IMR-90 (cell line): ENCODE measurements at regions of chr3 and their contacts with region 1.

Region 1: DNA sequence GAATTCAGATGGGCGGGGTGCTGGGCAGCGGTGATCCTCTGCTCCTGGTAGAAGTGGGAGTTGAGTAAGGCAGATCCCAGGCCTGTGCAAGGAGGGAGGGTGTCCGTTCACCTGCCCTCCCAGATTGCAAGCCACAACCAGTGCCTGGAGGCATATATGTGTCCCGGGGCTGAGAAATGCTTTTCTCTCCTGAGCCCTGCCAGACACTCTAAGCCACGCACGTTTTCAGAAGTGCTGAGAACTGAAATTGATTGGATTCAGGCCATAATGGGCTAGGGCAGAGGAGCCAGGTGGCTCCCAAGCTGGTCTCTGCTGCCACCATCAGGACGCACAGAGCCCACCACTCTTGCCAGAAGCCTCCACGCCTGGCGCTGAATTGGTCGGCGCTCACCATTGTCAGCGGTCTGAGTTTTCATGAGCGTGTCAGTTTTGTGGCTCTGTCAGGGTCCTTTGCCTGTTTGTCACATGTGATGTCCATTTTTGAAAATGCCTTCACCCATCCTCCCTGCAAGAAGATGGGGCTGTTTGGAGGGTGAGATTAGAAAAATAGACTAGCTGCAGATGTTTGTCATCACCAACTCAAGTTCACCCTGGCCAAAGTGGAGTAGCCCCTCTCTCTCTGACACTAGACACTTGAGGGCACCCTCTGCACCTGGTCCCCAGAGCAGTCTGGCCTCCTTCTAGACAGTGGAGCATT is 15.4 kb upstream of the BFSP2 start:
- DNase-seq: peak; percentile 65
- ATAC-seq: peak; percentile 95
- H3K4me3 ChIP-seq: no peak overlapping the region
- H3K27ac ChIP-seq: no peak overlapping the region
- H3K4me1 ChIP-seq: 0 out of 2 replicates have a peak, but pooled peaks cover 2% of the 10 kb centered on the region
- H3K27me3 ChIP-seq: no peaks in the 10 kb centered on the region
- CTCF ChIP-seq: peak; percentile 82
- POLR2A ChIP-seq: no peak
- RAD21 ChIP-seq: peak; percentile 92

Region 2: GRCh38 chr3:132722164-132723024 is 662.1 kb before region 1 on chr3 and contains the start of gene NPHP3:
- CTCF ChIA-PET with region 1: interaction called, 6 read pairs
- POLR2A ChIA-PET with region 1: no interaction called
- dilution Hi-C with region 1: no loop called
- in situ Hi-C with region 1: loop called (anchors 5 kb)
- intact Hi-C with region 1: no loop called
- DNase-seq: peak; percentile 96
- ATAC-seq: peak; percentile 87
- H3K4me3 ChIP-seq: peak within 1 kb of the TSS; percentile 96
- H3K27ac ChIP-seq: peak within 1 kb of the TSS; percentile 88
- H3K4me1 ChIP-seq: peaks cover 7% of the 10 kb centered on the region
- H3K27me3 ChIP-seq: no peaks in the 10 kb centered on the region
- CTCF ChIP-seq: no peak
- POLR2A ChIP-seq: peak; percentile 89
- RAD21 ChIP-seq: no peak
- total RNA-seq, gene NPHP3: 21.3 and 26.9 TPM in 2 replicates

Region 3: GRCh38 chr3:133040696-133041523 is 343.6 kb before region 1 on chr3:
- CTCF ChIA-PET with region 1: interaction called, 5 read pairs
- POLR2A ChIA-PET with region 1: no interaction called
- dilution Hi-C with region 1: no loop called
- in situ Hi-C with region 1: loop called (anchors 5 kb)
- intact Hi-C with region 1: loop called (anchors 1 kb)
- DNase-seq: peak; percentile 71
- ATAC-seq: peak; percentile 92
- H3K4me3 ChIP-seq: no peak overlapping the region
- H3K27ac ChIP-seq: no peak overlapping the region
- H3K4me1 ChIP-seq: no peaks in the 10 kb centered on the region
- H3K27me3 ChIP-seq: peaks cover 21% of the 10 kb centered on the region
- CTCF ChIP-seq: peak; percentile 91
- POLR2A ChIP-seq: no peak
- RAD21 ChIP-seq: peak; percentile 94

Region 4: DNA sequence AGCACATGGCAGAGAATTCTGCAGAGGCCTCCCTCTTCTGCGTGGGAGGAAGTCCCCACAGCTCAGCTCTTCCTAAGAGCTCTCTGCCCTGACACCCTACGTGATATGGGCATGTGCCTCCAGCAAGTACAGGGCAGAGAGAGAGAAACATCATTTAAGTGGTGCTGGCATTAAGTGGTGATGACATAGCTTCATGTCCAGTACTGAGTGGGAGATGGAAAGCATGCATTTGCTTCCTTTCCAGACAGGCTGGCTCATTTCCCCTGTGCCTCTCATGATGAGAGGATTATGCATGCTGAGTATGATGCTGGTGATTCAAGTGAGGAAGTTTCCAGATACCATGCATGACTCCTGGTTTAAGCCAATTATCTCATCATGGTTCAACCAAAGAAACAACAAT is 42.2 kb after region 1 on chr3:
- CTCF ChIA-PET with region 1: interaction called, 4 read pairs
- POLR2A ChIA-PET with region 1: no interaction called
- dilution Hi-C with region 1: no loop called
- in situ Hi-C with region 1: no loop called
- intact Hi-C with region 1: loop called (anchors 2 kb)
- DNase-seq: peak; percentile 86
- ATAC-seq: peak; percentile 61
- H3K4me3 ChIP-seq: no peak overlapping the region
- H3K27ac ChIP-seq: no peak overlapping the region
- H3K4me1 ChIP-seq: peaks cover 2% of the 10 kb centered on the region; the same call in 1 of the 2 replicates
- H3K27me3 ChIP-seq: peaks cover 3% of the 10 kb centered on the region
- CTCF ChIP-seq: no peak
- POLR2A ChIP-seq: no peak
- RAD21 ChIP-seq: no peak